ENCODE measurements at regions of chr6 and their contacts with region 1.

Region 1: GRCh38 chr6:27188885-27189418 is 58.5 kb upstream of the PRSS16 start:
- DNase-seq: peak in 9 of 14 experiments; percentile 28 to 86 (median 39)
- ATAC-seq: peak; percentile 85
- H3K4me3 ChIP-seq: peak overlapping the region; percentile 66
- H3K4me3 Mint-ChIP-seq: peak overlapping the region; percentile 88
- H3K27ac ChIP-seq: no peak overlapping the region
- H3K27ac Mint-ChIP-seq: peak overlapping the region; percentile 3
- H3K4me1 ChIP-seq: peaks cover 18% of the 10 kb centered on the region
- H3K4me1 Mint-ChIP-seq: peaks cover 13% of the 10 kb centered on the region
- H3K27me3 ChIP-seq: no peaks in the 10 kb centered on the region
- H3K27me3 Mint-ChIP-seq: peaks cover 9% of the 10 kb centered on the region
- CTCF ChIP-seq: peak; percentile 85

Region 2: GRCh38 chr6:27260369-27260768 is 71.4 kb after region 1 on chr6:
- CTCF ChIA-PET with region 1: no interaction called
- POLR2A ChIA-PET with region 1: no interaction called
- intact Hi-C with region 1: no loop called
- DNase-seq: no peak
- ATAC-seq: no peak
- H3K4me3 ChIP-seq: no peak overlapping the region
- H3K4me3 Mint-ChIP-seq: no peak overlapping the region
- H3K27ac ChIP-seq: no peak overlapping the region
- H3K27ac Mint-ChIP-seq: no peak overlapping the region
- H3K4me1 ChIP-seq: peaks cover 7% of the 10 kb centered on the region
- H3K4me1 Mint-ChIP-seq: no peaks in the 10 kb centered on the region
- H3K27me3 ChIP-seq: peaks cover 20 to 81% of the 10 kb centered on the region in 2 experiments
- H3K27me3 Mint-ChIP-seq: peaks cover 96% of the 10 kb centered on the region
- CTCF ChIP-seq: no peak

Region 3: DNA sequence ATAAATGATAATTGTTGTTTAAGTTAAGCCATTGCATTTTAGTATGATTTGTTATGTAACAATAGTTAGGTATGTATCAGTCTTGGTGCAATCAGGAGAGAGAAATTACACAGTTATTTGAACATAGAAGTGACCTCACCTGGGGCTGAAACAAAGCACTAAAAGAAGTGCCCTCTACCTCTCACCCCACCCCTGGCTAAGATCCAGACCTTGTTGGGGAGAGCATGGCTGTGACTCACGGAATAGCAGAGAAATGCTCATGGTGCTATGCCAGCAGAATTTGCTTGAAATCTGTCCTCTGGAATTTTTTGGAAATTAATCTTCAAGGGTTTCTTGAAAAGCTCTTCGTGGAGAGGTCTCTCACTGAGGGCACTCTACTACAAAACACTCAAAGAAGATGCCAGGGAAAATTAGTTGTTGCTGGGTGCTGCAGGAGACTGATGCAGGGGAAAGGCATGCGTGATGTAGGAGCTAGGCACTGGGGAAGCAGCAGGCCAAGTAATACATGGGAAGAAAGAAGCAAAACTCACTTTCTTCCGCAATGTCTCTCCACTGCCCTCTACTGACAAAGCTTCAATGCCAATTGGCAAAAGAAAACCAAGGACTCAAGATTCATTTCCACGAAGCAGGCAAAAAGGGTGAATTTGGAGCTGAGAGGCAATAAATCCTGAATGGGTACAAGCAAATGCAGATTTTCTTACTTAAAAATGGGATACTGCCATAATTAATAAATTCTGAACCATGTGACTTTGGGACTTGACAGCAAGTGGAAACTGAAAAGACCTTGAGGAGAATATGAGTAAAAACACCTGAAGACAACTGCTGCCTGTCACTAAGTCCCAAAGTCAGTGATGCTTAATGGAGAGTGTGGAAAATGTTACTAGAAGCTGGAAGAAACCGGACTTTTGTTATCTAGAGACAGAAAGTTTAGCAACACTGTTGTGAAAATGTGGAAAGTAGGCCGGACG is 420.2 kb after region 1 on chr6:
- CTCF ChIA-PET with region 1: no interaction called
- POLR2A ChIA-PET with region 1: no interaction called
- intact Hi-C with region 1: loop called in 1 of 2 experiments (anchors 1 kb)
- DNase-seq: peak in 3 of 14 experiments; percentile 48 to 58 (median 56)
- ATAC-seq: no peak
- H3K4me3 ChIP-seq: no peak overlapping the region
- H3K4me3 Mint-ChIP-seq: no peak overlapping the region
- H3K27ac ChIP-seq: no peak overlapping the region
- H3K27ac Mint-ChIP-seq: no peak overlapping the region
- H3K4me1 ChIP-seq: peaks cover 10% of the 10 kb centered on the region
- H3K4me1 Mint-ChIP-seq: peaks cover 18% of the 10 kb centered on the region
- H3K27me3 ChIP-seq: peaks cover 25 to 45% of the 10 kb centered on the region in 2 experiments
- H3K27me3 Mint-ChIP-seq: peaks cover 74% of the 10 kb centered on the region
- CTCF ChIP-seq: peak; percentile 59